ENCODE measurements at regions of chr6 and their contacts with region 1.

Region 1: DNA sequence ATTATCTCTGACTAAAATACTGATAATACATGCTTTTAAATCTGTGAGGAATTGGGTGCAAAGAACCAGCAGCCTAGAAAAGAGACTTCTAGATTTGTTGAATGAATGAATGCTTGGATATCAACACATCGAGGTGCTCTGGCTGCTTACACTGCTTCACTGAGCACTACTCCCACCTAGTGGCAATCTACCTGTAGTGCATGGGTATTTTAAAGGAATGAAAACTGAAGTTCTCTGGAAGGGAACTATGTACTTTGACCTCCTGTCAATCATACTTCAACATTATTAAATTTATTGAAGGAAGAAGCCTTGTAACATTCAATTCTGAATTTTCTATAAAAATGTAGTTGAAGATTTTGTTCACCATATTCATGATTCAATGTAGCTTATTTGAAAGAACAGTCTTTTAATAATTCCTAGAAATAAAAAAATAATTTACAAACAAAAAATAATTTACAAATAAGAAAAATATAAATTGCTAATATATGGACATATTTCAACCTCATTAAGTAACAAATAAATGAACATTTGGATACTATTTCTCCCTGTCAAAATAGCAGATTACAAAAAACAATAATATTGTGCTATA is 111.2 kb upstream of the MMS22L start:
- DNase-seq: peak; percentile 64
- ATAC-seq: peak; percentile 94
- H3K4me3 ChIP-seq: no peak overlapping the region
- H3K27ac ChIP-seq: no peak overlapping the region
- H3K4me1 ChIP-seq: no peaks in the 10 kb centered on the region
- H3K27me3 ChIP-seq: no peaks in the 10 kb centered on the region
- CTCF ChIP-seq: peak; percentile 81 to 91 (median 82)
- POLR2A ChIP-seq: no peak
- RAD21 ChIP-seq: peak; percentile 87

Region 2: GRCh38 chr6:97068211-97068610 is 326.0 kb before region 1 on chr6:
- CTCF ChIA-PET with region 1: no interaction called
- POLR2A ChIA-PET with region 1: no interaction called
- RAD21 ChIA-PET with region 1: no interaction called
- intact Hi-C with region 1: loop called (anchors 1 kb)
- DNase-seq: peak; percentile 12
- ATAC-seq: no peak
- H3K4me3 ChIP-seq: no peak overlapping the region
- H3K27ac ChIP-seq: no peak overlapping the region
- H3K4me1 ChIP-seq: peaks cover 0 to 8% of the 10 kb centered on the region in 2 experiments; a peak in 1 of 4 replicates
- H3K27me3 ChIP-seq: no peaks in the 10 kb centered on the region
- CTCF ChIP-seq: peak; percentile 28 to 56 (median 54); a peak in 4 of 6 replicates
- POLR2A ChIP-seq: no peak
- RAD21 ChIP-seq: peak; percentile 75

Region 3: GRCh38 chr6:97186416-97186999 is 207.7 kb before region 1 on chr6:
- CTCF ChIA-PET with region 1: interaction called, 4 read pairs
- POLR2A ChIA-PET with region 1: no interaction called
- RAD21 ChIA-PET with region 1: no interaction called
- intact Hi-C with region 1: loop called (anchors 1 kb)
- DNase-seq: peak; percentile 42
- ATAC-seq: peak; percentile 90
- H3K4me3 ChIP-seq: no peak overlapping the region
- H3K27ac ChIP-seq: no peak overlapping the region
- H3K4me1 ChIP-seq: no peaks in the 10 kb centered on the region
- H3K27me3 ChIP-seq: no peaks in the 10 kb centered on the region
- CTCF ChIP-seq: peak; percentile 65 to 97 (median 87); a peak in 5 of 6 replicates
- POLR2A ChIP-seq: no peak
- RAD21 ChIP-seq: peak; percentile 77

Region 4: GRCh38 chr6:97215157-97215769 is 179.0 kb before region 1 on chr6:
- CTCF ChIA-PET with region 1: interaction called, 4 read pairs
- POLR2A ChIA-PET with region 1: no interaction called
- RAD21 ChIA-PET with region 1: no interaction called
- intact Hi-C with region 1: loop called (anchors 10 kb)
- DNase-seq: peak; percentile 12
- ATAC-seq: peak; percentile 69
- H3K4me3 ChIP-seq: no peak overlapping the region
- H3K27ac ChIP-seq: no peak overlapping the region
- H3K4me1 ChIP-seq: no peaks in the 10 kb centered on the region
- H3K27me3 ChIP-seq: no peaks in the 10 kb centered on the region
- CTCF ChIP-seq: peak; percentile 30 to 47 (median 41); a peak in 5 of 6 replicates
- POLR2A ChIP-seq: no peak
- RAD21 ChIP-seq: peak; percentile 61

Measured in HCT116 (cell line).